IMR-90 (cell line): ENCODE measurements at regions of chr7 and their contacts with region 1.

Region 1: GRCh38 chr7:134613623-134614347 is 32.9 kb upstream of the BPGM start:
- DNase-seq: peak; percentile 99
- ATAC-seq: peak; percentile 92
- H3K4me3 ChIP-seq: no peak overlapping the region
- H3K27ac ChIP-seq: peak overlapping the region; percentile 28; the same call in 1 of the 2 replicates
- H3K4me1 ChIP-seq: peaks cover 4% of the 10 kb centered on the region; the same call in 1 of the 2 replicates
- H3K27me3 ChIP-seq: no peaks in the 10 kb centered on the region
- CTCF ChIP-seq: 0 out of 2 replicates have a peak, but pooled peaks have one; percentile 21
- POLR2A ChIP-seq: peak; percentile 17; the same call in 1 of the 2 replicates
- RAD21 ChIP-seq: peak; percentile 22; the same call in 1 of the 2 replicates

Region 2: GRCh38 chr7:134444198-134444871 is 169.4 kb before region 1 on chr7:
- CTCF ChIA-PET with region 1: no interaction called
- POLR2A ChIA-PET with region 1: no interaction called
- dilution Hi-C with region 1: no loop called
- in situ Hi-C with region 1: loop called (anchors 5 kb)
- intact Hi-C with region 1: no loop called
- DNase-seq: no peak
- ATAC-seq: no peak
- H3K4me3 ChIP-seq: no peak overlapping the region
- H3K27ac ChIP-seq: no peak overlapping the region
- H3K4me1 ChIP-seq: peaks cover 11% of the 10 kb centered on the region
- H3K27me3 ChIP-seq: no peaks in the 10 kb centered on the region
- CTCF ChIP-seq: no peak
- POLR2A ChIP-seq: no peak
- RAD21 ChIP-seq: no peak

Region 3: GRCh38 chr7:134757938-134758337 is 144.2 kb after region 1 on chr7:
- CTCF ChIA-PET with region 1: no interaction called
- POLR2A ChIA-PET with region 1: no interaction called
- dilution Hi-C with region 1: no loop called
- in situ Hi-C with region 1: no loop called
- intact Hi-C with region 1: no loop called
- DNase-seq: peak; percentile 78
- ATAC-seq: peak; percentile 53
- H3K4me3 ChIP-seq: no peak overlapping the region
- H3K27ac ChIP-seq: no peak overlapping the region
- H3K4me1 ChIP-seq: peaks cover 8% of the 10 kb centered on the region
- H3K27me3 ChIP-seq: no peaks in the 10 kb centered on the region
- CTCF ChIP-seq: no peak
- POLR2A ChIP-seq: no peak
- RAD21 ChIP-seq: no peak